B cell (primary cell): ENCODE measurements at regions of chr3 and their contacts with region 1.

Region 1: DNA sequence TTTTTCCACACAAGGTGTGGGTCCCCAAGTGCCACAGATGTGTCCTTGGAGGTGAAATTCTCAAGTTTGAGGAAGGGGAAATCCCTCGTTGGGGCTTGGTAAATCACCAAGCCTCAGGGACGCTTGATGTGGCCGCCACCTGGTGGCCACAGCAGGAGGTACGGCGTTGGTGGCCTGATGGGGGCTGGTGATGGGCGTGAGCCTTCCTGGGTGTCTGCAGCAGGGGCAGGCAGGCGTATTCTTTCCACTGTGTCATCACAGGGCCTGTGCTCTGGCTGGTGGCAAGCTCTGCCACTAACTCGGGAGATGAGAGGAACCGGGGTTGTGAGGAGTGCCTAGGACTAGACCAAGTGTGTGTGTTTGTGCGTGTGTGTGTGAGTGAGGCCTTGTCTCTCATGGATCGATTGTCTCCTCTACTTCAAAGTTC is 4.2 kb downstream of the ACOX2 start:
- DNase-seq: peak; percentile 89
- ATAC-seq: peak; percentile 99
- H3K4me3 ChIP-seq: no peak overlapping the region
- H3K4me3 Mint-ChIP-seq: no peak overlapping the region
- H3K27ac ChIP-seq: no peak overlapping the region
- H3K27ac Mint-ChIP-seq: peak overlapping the region; percentile 7
- H3K4me1 ChIP-seq: peaks cover 6 to 8% of the 10 kb centered on the region in 2 donors
- H3K4me1 Mint-ChIP-seq: peaks cover 6% of the 10 kb centered on the region
- H3K27me3 ChIP-seq: no peaks in the 10 kb centered on the region
- H3K27me3 Mint-ChIP-seq: no peaks in the 10 kb centered on the region
- CTCF ChIP-seq: peak; percentile 91

Region 2: GRCh38 chr3:58266577-58266976 is 266.2 kb before region 1 on chr3:
- CTCF ChIA-PET with region 1: no interaction called
- POLR2A ChIA-PET with region 1: no interaction called
- intact Hi-C with region 1: no loop called
- DNase-seq: no peak
- ATAC-seq: no peak
- H3K4me3 ChIP-seq: no peak overlapping the region
- H3K4me3 Mint-ChIP-seq: no peak overlapping the region
- H3K27ac ChIP-seq: no peak overlapping the region
- H3K27ac Mint-ChIP-seq: no peak overlapping the region
- H3K4me1 ChIP-seq: no peaks in the 10 kb centered on the region
- H3K4me1 Mint-ChIP-seq: no peaks in the 10 kb centered on the region
- H3K27me3 ChIP-seq: no peaks in the 10 kb centered on the region
- H3K27me3 Mint-ChIP-seq: no peaks in the 10 kb centered on the region
- CTCF ChIP-seq: no peak

Region 3: DNA sequence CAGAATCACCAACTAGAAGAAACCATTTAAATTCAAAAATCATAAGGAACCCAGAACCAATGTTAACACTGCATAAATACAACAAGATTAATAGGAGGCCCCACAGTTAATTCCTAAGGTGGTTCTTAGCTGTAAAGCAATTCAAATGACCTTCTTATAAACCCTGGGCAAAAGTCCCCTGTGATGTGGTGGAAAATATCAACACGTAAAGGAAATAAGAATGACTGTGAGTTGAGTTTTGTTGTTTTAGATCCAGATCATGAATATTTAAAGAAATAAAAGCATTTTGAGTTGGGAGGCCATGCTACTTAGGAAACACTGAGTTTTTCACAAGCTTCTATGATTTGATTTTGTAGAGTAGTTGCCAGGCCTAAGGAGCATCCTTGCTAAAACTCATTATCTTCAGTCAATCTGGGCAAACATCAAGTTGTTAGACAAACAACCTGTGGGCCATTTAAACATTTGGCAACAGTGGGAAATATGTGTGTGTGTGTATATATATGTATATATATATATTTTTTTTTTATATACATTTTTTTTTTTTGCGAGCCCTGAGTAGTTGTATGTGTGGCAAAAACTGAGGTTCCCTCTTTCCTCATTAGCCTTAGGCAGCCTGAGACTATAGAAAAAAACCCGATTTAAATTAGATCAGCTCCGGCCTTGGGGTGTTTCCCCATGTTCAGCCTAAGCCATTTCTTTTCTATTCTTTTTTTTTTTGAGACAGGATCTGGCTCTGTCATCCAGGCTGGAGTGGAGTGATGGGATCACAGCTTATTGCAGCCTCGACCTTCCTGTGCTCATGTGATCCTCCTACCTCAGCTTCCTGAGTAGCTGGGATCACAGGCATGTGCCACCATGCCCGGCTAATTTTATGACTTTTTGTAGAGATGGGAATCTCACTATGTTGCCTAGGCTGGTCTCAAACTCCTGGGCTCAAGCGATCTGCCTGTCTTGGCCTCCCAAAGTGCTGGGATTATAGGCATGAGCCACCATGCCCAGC is 208.1 kb before region 1 on chr3:
- CTCF ChIA-PET with region 1: interaction called, 16 read pairs
- POLR2A ChIA-PET with region 1: no interaction called
- intact Hi-C with region 1: loop called (anchors 1 kb)
- DNase-seq: no peak
- ATAC-seq: peak; percentile 39
- H3K4me3 ChIP-seq: no peak overlapping the region
- H3K4me3 Mint-ChIP-seq: peak overlapping the region; percentile 57
- H3K27ac ChIP-seq: peak overlapping the region in 1 of 2 donors; percentile 62
- H3K27ac Mint-ChIP-seq: peak overlapping the region; percentile 74
- H3K4me1 ChIP-seq: peaks cover 21 to 29% of the 10 kb centered on the region in 2 donors
- H3K4me1 Mint-ChIP-seq: peaks cover 38% of the 10 kb centered on the region
- H3K27me3 ChIP-seq: no peaks in the 10 kb centered on the region
- H3K27me3 Mint-ChIP-seq: no peaks in the 10 kb centered on the region
- CTCF ChIP-seq: no peak

Region 4: DNA sequence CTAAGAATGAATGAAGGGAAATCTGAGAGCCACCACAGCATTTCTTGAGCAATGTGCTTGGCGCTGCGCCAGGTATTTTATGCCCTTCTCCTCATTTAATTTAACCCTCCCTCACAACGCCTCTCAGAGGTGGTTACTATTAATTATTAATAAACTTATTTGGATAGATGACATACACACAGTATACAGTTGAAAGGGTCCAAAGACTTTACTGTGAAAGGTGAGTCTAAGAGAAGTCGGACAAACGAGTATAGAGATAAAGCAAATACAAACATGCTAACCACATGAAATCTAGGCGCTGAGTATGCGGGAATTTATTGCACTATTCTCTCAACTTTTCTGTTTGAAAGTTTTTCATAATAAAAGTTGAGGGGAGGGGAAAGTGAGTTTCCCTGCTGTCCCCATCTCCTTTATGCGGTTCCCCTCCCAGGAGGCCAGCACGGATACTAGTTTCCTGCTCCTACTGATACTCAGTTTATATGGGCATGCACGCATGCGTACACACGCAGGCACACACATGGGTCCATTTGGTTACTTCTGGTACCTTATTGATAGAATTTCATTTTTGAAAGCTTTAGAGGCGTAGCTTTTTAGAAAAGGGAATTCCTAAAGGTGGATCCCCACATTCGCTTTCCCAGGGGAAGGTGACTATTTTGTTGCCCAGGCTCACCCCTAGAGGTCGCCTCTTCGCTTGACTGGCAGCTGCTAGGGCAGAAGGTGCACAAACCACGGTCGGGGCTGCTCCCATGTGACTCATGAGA is 69.4 kb before region 1 on chr3:
- CTCF ChIA-PET with region 1: interaction called, 8 read pairs
- POLR2A ChIA-PET with region 1: no interaction called
- intact Hi-C with region 1: loop called (anchors 1 kb)
- DNase-seq: peak; percentile 67
- ATAC-seq: peak; percentile 90
- H3K4me3 ChIP-seq: peak overlapping the region in 2 of 5 experiments; percentile 3 to 35
- H3K4me3 Mint-ChIP-seq: peak overlapping the region; percentile 54
- H3K27ac ChIP-seq: no peak overlapping the region
- H3K27ac Mint-ChIP-seq: no peak overlapping the region
- H3K4me1 ChIP-seq: peaks cover 7 to 9% of the 10 kb centered on the region in 2 donors
- H3K4me1 Mint-ChIP-seq: peaks cover 7% of the 10 kb centered on the region
- H3K27me3 ChIP-seq: no peaks in the 10 kb centered on the region
- H3K27me3 Mint-ChIP-seq: no peaks in the 10 kb centered on the region
- CTCF ChIP-seq: peak; percentile 76

Region 5: DNA sequence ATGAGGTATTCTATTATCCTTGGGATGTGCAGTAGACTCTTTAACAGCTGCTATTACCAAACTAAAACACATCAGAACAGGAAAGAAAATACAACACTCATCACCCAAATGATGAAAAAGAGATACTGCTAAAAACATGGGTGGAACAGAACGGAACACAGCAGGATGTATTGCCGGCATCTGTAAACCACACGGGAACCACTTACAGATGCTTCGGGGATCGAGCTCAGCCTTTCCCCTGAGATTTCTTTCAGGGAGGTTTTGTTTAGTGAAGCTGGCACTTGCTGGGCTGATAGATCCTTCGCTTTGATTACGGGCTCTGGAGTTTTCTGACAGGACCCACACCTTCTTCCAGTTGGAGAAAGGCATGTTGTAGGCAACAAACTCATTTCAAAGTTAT is 316.0 kb after region 1 on chr3:
- CTCF ChIA-PET with region 1: no interaction called
- POLR2A ChIA-PET with region 1: no interaction called
- intact Hi-C with region 1: no loop called
- DNase-seq: no peak
- ATAC-seq: no peak
- H3K4me3 ChIP-seq: no peak overlapping the region
- H3K4me3 Mint-ChIP-seq: no peak overlapping the region
- H3K27ac ChIP-seq: no peak overlapping the region
- H3K27ac Mint-ChIP-seq: no peak overlapping the region
- H3K4me1 ChIP-seq: no peaks in the 10 kb centered on the region
- H3K4me1 Mint-ChIP-seq: peaks cover 4% of the 10 kb centered on the region
- H3K27me3 ChIP-seq: no peaks in the 10 kb centered on the region
- H3K27me3 Mint-ChIP-seq: peaks cover 3% of the 10 kb centered on the region
- CTCF ChIP-seq: no peak